ENCODE measurements at regions of chr4 and their contacts with region 1.

Region 1: DNA sequence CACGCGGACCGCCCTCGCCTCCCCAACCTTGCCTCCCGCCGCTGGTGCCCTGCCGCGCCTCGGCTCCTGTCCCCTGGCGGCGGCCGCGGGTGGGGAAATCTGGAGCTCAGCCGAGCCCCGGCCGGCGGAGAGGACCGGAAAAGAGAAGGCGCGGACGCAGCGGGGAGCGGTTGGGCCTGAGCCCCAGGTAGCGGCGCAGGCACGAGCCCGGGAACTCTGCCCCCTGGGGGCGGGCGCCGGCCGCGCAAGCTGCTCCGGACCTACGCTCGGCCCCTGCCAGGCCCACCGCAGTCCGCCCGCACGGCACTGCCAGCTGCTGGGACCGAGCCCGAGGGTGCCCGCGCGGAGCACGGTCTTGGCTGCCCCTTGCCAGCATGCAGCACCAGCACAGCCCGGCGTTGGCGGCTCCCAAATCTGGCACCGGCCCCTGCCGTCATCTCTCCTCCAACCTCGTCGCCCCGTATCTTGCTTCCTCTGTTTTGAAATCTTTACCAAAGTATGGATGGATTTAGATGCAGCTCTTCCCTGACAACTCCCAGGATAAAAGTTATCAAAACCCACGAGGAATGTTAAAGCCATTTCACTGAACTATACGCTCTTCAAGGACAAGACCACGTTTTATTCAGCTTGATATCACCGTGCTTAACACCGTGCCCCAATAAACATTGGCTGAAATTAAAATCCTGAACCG is at the start of gene PRSS12:
- DNase-seq: no peak
- H3K4me3 ChIP-seq: peak within 1 kb of the TSS; percentile 81
- CTCF ChIP-seq: peak; percentile 84

Region 2: GRCh38 chr4:118206627-118207026 is 146.4 kb before region 1 on chr4:
- CTCF ChIA-PET with region 1: no interaction called
- POLR2A ChIA-PET with region 1: no interaction called
- DNase-seq: peak; percentile 24
- H3K4me3 ChIP-seq: no peak overlapping the region
- CTCF ChIP-seq: no peak

Region 3: DNA sequence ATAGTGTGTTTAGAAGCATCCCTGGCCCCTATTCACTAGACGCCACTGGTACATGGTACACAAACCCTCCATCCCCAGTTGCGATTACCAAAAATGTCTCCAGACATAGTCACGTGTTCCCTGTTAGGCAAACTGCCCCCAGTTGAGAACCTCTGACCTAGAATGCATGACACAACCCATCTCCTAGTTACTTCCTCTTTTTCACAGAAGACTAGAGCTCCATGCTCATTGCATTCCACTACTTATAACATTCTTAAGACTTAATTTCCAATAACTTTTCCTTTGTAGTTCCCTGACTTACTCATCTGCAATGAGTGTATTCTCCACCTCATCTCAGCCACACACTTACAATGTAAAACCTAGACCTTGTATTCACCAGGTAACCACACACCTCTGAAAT is 68.8 kb before region 1 on chr4:
- CTCF ChIA-PET with region 1: interaction called, 18 read pairs
- POLR2A ChIA-PET with region 1: interaction called, 12 read pairs
- DNase-seq: no peak
- H3K4me3 ChIP-seq: no peak overlapping the region
- CTCF ChIP-seq: no peak

Region 4: GRCh38 chr4:118296729-118297128 is 56.3 kb before region 1 on chr4:
- CTCF ChIA-PET with region 1: interaction called, 12 read pairs
- POLR2A ChIA-PET with region 1: no interaction called
- DNase-seq: no peak
- H3K4me3 ChIP-seq: no peak overlapping the region
- CTCF ChIP-seq: no peak

Region 5: GRCh38 chr4:118325431-118325830 is 27.6 kb before region 1 on chr4:
- CTCF ChIA-PET with region 1: interaction called, 11 read pairs
- POLR2A ChIA-PET with region 1: no interaction called
- DNase-seq: no peak
- H3K4me3 ChIP-seq: no peak overlapping the region
- CTCF ChIP-seq: no peak

Region 6: GRCh38 chr4:118367872-118368271 is 14.9 kb after region 1 on chr4:
- CTCF ChIA-PET with region 1: interaction called, 135 read pairs
- POLR2A ChIA-PET with region 1: no interaction called
- DNase-seq: no peak
- H3K4me3 ChIP-seq: no peak overlapping the region
- CTCF ChIP-seq: no peak

Region 7: GRCh38 chr4:118417325-118417724 is 64.3 kb after region 1 on chr4:
- CTCF ChIA-PET with region 1: interaction called, 23 read pairs
- POLR2A ChIA-PET with region 1: no interaction called
- DNase-seq: peak; percentile 74
- H3K4me3 ChIP-seq: no peak overlapping the region
- CTCF ChIP-seq: no peak